ENCODE measurements at regions of chr4 and their contacts with region 1.

Region 1: GRCh38 chr4:137531986-137532868 is at the start of gene PCDH18:
- DNase-seq: peak; percentile 89
- ATAC-seq: peak; percentile 94
- total RNA-seq, gene PCDH18: 6.2 TPM

Region 2: GRCh38 chr4:137203601-137204000 is 328.6 kb before region 1 on chr4:
- intact Hi-C with region 1: no loop called
- DNase-seq: no peak
- ATAC-seq: no peak

Region 3: DNA sequence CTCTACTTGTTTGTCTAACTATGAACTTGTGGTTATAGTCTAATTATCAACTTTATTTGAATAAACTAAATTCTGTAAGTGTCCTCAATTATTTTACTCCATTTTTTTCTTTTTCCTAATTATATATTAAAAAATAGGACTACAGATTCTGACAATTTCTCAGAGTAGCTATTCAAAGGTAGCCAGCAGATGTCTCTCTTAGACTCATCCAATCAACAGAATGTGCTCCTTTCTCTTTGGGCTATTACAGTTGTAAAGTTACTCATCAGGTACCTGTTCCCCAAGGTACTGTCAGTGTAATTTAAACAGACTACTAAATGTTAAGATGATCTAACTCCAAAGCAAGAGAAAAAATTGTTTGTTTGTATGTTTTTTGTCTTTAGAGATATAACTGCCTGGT is 248.5 kb before region 1 on chr4:
- intact Hi-C with region 1: loop called (anchors 5 kb)
- DNase-seq: no peak
- ATAC-seq: no peak

Region 4: DNA sequence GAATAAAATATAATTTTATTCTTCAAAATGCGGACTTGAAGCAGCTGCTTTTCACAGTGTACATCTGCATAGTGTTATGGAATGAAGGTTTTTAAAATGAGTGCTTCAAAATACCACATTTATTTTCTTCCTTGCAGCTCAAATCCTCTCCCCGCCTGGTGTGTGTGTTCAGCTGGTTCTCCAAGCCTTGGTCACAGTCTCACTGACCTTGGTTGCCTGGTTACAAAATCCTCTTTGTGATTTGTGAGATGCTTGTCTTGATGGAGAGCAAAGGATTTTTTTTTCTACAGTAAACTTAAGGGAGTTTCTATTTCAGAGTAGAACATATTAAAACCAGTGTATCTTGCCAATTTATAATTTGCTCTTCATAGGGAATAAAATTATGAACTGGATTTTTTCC is 139.2 kb before region 1 on chr4:
- intact Hi-C with region 1: loop called (anchors 5 kb)
- DNase-seq: no peak
- ATAC-seq: peak; percentile 77

Region 5: GRCh38 chr4:137861682-137862081 is 329.5 kb after region 1 on chr4:
- intact Hi-C with region 1: loop called (anchors 2 kb)
- DNase-seq: no peak
- ATAC-seq: no peak